ENCODE measurements at regions of chr6 and their contacts with region 1.

Region 1: GRCh38 chr6:43013843-43014433 is at the starts of genes KLHDC3 and MEA1:
- DNase-seq: peak; percentile 99 to 100
- H3K4me3 ChIP-seq: peak within 1 kb of the TSS; percentile 85 to 99 (median 88)
- H3K27ac ChIP-seq: peak within 1 kb of the TSS; percentile 54
- H3K4me1 ChIP-seq: peaks cover 0 to 9% (median 4%) of the 10 kb centered on the region in 4 experiments; a peak in 6 of 7 replicates
- H3K27me3 ChIP-seq: no peaks in the 10 kb centered on the region
- CTCF ChIP-seq: no peak
- EP300 ChIP-seq: peak in 1 of 2 experiments; percentile 23; a peak in 1 of 3 replicates
- POLR2A ChIP-seq: no peak
- RAD21 ChIP-seq: peak in 1 of 2 experiments; percentile 12; a peak in 1 of 4 replicates
- total RNA-seq, gene KLHDC3: 181 and 182 TPM in 2 replicates
- total RNA-seq, gene MEA1: 94.2 and 102 TPM in 2 replicates

Region 2: GRCh38 chr6:42963855-42964605 is 49.9 kb before region 1 on chr6:
- CTCF ChIA-PET with region 1: interaction called, 22 read pairs
- POLR2A ChIA-PET with region 1: interaction called, 21 read pairs
- DNase-seq: peak; percentile 64 to 82
- H3K4me3 ChIP-seq: no peak overlapping the region
- H3K27ac ChIP-seq: no peak overlapping the region
- H3K4me1 ChIP-seq: peaks cover 0 to 10% (median 6%) of the 10 kb centered on the region in 4 experiments; a peak in 5 of 7 replicates
- H3K27me3 ChIP-seq: peaks cover 0 to 13% (median 10%) of the 10 kb centered on the region in 4 experiments; a peak in 5 of 7 replicates
- CTCF ChIP-seq: peak in 2 of 3 experiments; percentile 50 to 63; a peak in 3 of 4 replicates
- EP300 ChIP-seq: no peak
- POLR2A ChIP-seq: no peak
- RAD21 ChIP-seq: peak; percentile 69 to 79

Region 3: DNA sequence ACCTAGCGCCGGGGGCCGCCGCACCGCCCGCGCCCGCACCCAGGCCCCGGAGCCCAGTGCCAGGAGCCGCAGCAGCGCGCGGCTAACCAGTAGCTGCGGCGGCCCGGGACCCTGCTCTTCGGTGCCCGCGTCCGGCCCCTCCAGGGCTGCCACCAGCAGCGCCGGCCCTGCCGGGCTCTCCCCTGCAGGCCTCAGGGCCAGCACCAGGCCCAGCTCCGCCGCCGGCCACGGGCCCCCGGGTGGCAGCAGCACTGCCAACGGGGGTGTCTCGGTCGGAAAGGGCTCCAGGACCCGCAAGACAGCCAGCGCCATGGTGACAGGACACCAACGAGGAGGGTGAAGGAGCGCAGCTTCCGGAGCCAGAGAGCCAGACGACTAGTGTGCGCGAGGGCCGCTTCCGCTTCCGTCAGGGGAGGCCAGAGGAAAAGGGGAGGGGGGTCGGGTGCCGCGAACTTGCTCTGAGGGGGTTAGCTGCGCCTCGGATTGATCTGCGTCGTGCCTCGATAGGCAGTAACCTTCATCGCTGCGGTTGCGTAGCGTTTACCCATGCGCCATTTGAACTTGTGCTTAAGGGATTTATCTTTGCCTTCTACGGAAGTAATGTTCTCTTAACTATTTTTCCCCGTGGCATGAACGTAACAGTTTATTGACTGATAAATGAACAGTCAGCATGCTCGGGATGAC is 35.0 kb before region 1 on chr6 and contains the start of gene PEX6:
- CTCF ChIA-PET with region 1: interaction called, 6 read pairs
- POLR2A ChIA-PET with region 1: interaction called, 26 read pairs
- DNase-seq: peak; percentile 76 to 89
- H3K4me3 ChIP-seq: peak within 1 kb of the TSS; percentile 67 to 92 (median 70)
- H3K27ac ChIP-seq: no peak within 1 kb of the TSS
- H3K4me1 ChIP-seq: peaks cover 4 to 10% (median 6%) of the 10 kb centered on the region in 4 experiments; a peak in 3 of 7 replicates
- H3K27me3 ChIP-seq: no peaks in the 10 kb centered on the region
- CTCF ChIP-seq: no peak; a peak in 1 of 4 replicates
- EP300 ChIP-seq: no peak
- POLR2A ChIP-seq: peak; percentile 68 to 69; a peak in 2 of 3 replicates
- RAD21 ChIP-seq: no peak
- total RNA-seq, gene PEX6: 11.7 and 12.5 TPM in 2 replicates

Region 4: GRCh38 chr6:42996513-42996912 is 17.4 kb before region 1 on chr6:
- CTCF ChIA-PET with region 1: interaction called, 21 read pairs
- POLR2A ChIA-PET with region 1: interaction called, 19 read pairs
- DNase-seq: no peak
- H3K4me3 ChIP-seq: no peak overlapping the region
- H3K27ac ChIP-seq: no peak overlapping the region
- H3K4me1 ChIP-seq: no peaks in the 10 kb centered on the region; a peak in 1 of 7 replicates
- H3K27me3 ChIP-seq: no peaks in the 10 kb centered on the region
- CTCF ChIP-seq: no peak
- EP300 ChIP-seq: no peak
- POLR2A ChIP-seq: no peak
- RAD21 ChIP-seq: no peak

Region 5: GRCh38 chr6:43075670-43076463 is 61.9 kb after region 1 on chr6 and contains the start of gene PTK7:
- CTCF ChIA-PET with region 1: interaction called, 7 read pairs
- POLR2A ChIA-PET with region 1: interaction called, 20 read pairs
- DNase-seq: peak in 1 of 2 experiments; percentile 88
- H3K4me3 ChIP-seq: peak within 1 kb of the TSS; percentile 84 to 95 (median 94)
- H3K27ac ChIP-seq: peak within 1 kb of the TSS; percentile 77; the same call in 1 of the 2 replicates
- H3K4me1 ChIP-seq: peaks cover 6 to 17% (median 12%) of the 10 kb centered on the region in 4 experiments; a peak in 6 of 7 replicates
- H3K27me3 ChIP-seq: 0 out of 7 replicates have a peak, but pooled peaks cover 0 to 2% (median 0%) of the 10 kb centered on the region in 4 experiments
- CTCF ChIP-seq: no peak
- EP300 ChIP-seq: no peak; a peak in 1 of 3 replicates
- POLR2A ChIP-seq: no peak; a peak in 1 of 3 replicates
- RAD21 ChIP-seq: no peak
- total RNA-seq, gene PTK7: 130 and 138 TPM in 2 replicates

Region 6: GRCh38 chr6:44761046-44761445 is 1747.1 kb after region 1 on chr6:
- CTCF ChIA-PET with region 1: no interaction called
- POLR2A ChIA-PET with region 1: no interaction called
- DNase-seq: no peak
- H3K4me3 ChIP-seq: no peak overlapping the region
- H3K27ac ChIP-seq: no peak overlapping the region
- H3K4me1 ChIP-seq: no peaks in the 10 kb centered on the region
- H3K27me3 ChIP-seq: no peaks in the 10 kb centered on the region
- CTCF ChIP-seq: no peak
- EP300 ChIP-seq: no peak
- POLR2A ChIP-seq: no peak
- RAD21 ChIP-seq: no peak